Kidney (tissue), 22 donors: ENCODE measurements at regions of chr11 and their contacts with region 1.

Region 1: GRCh38 chr11:10730151-10730550 is 20.9 kb upstream of the CTR9 start:
- DNase-seq: no peak
- H3K4me3 ChIP-seq: no peak overlapping the region
- H3K27ac ChIP-seq: no peak overlapping the region
- H3K4me1 ChIP-seq: no peaks in the 10 kb centered on the region
- H3K27me3 ChIP-seq: no peaks in the 10 kb centered on the region
- CTCF ChIP-seq: no peak

Region 2: GRCh38 chr11:9875862-9876261 is 854.3 kb before region 1 on chr11:
- intact Hi-C with region 1: no loop called
- DNase-seq: peak in 1 of 5 donors; percentile 42
- H3K4me3 ChIP-seq: no peak overlapping the region
- H3K27ac ChIP-seq: no peak overlapping the region
- H3K4me1 ChIP-seq: no peaks in the 10 kb centered on the region
- H3K27me3 ChIP-seq: no peaks in the 10 kb centered on the region
- CTCF ChIP-seq: no peak

Region 3: DNA sequence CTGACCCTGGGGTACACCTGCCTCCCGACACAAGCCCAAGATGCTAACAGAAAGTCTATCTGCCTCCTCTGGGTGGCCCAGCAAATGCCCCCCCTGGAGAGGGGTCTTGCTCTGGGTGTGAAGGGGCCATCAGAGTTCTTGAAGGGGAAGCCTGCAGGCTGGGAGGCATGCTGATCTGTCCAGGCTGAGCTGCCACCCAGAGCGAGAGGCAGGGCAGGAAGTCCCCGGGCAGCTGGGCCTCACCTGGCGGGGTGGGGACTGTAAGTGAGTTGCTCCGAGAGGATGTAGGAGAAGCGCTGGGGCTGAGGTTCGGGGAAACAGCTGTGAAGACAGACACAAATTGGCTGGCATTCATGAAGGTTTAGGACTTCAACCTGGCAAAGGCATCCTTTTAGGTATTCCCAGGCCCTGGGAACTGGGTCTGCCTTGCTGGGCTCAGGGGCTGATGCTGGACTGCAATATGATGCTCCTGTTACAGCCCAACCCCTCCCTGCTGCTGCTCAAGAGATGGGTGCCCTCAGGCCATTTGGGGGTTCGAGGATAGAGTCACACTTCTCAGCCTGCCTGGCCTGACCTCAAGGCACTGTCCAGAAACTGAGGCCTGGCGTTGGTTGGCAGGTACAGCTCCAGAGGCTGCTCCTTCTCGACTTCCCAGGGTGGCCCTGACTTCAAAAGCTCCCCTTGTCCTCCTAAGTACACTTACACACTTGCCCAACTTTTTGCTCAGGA is 101.5 kb before region 1 on chr11:
- intact Hi-C with region 1: loop called (anchors 5 kb)
- DNase-seq: no peak
- H3K4me3 ChIP-seq: no peak overlapping the region
- H3K27ac ChIP-seq: no peak overlapping the region
- H3K4me1 ChIP-seq: peaks cover 0 to under 1% (median 0%) of the 10 kb centered on the region in 3 donors
- H3K27me3 ChIP-seq: no peaks in the 10 kb centered on the region
- CTCF ChIP-seq: no peak